ENCODE measurements at regions of chr18 and their contacts with region 1.

Region 1: DNA sequence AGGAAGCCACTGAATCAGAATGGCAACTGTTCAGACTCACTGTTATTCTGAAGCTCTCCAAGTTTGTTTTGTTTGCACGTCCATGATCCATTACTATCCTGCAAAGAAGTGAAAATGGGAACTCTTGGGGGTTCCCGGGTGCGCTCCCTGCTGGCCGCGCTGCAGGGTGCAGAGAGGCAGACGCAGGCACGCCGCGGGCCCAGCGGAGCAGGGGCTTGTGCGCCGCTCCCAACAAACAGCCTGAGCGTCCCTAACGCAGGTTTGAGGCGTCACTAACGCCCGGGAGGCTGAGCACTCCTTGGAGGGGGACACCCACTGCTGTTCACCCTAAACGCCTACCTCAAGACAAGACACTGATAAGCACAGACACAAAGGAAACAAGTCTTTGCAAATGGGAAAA is 14.3 kb upstream of the PIEZO2 start:
- DNase-seq: peak in 1 of 5 donors; percentile 69
- ATAC-seq: peak in 2 of 4 donors; percentile 63 to 67
- H3K4me3 ChIP-seq: no peak overlapping the region
- H3K27ac ChIP-seq: no peak overlapping the region
- H3K4me1 ChIP-seq: no peaks in the 10 kb centered on the region
- H3K27me3 ChIP-seq: peaks cover 0 to 24% (median 2%) of the 10 kb centered on the region in 9 donors
- CTCF ChIP-seq: peak; percentile 16 to 61 (median 40)
- POLR2A ChIP-seq: no peak

Region 2: GRCh38 chr18:10846657-10847407 is 316.8 kb before region 1 on chr18:
- intact Hi-C with region 1: loop called in 3 of 10 experiments (anchors 2 to 5 kb)
- DNase-seq: no peak
- ATAC-seq: no peak
- H3K4me3 ChIP-seq: no peak overlapping the region
- H3K27ac ChIP-seq: no peak overlapping the region
- H3K4me1 ChIP-seq: peaks cover 0 to 4% (median 0%) of the 10 kb centered on the region in 12 donors
- H3K27me3 ChIP-seq: peaks cover 0 to 6% (median 0%) of the 10 kb centered on the region in 9 donors
- CTCF ChIP-seq: no peak
- POLR2A ChIP-seq: no peak

Region 3: GRCh38 chr18:11387880-11388279 is 224.2 kb after region 1 on chr18:
- intact Hi-C with region 1: loop called in 1 of 10 experiments (anchors 10 kb)
- DNase-seq: peak; percentile 61 to 79 (median 74)
- ATAC-seq: peak in 3 of 4 donors; percentile 79 to 87 (median 81)
- H3K4me3 ChIP-seq: no peak overlapping the region
- H3K27ac ChIP-seq: no peak overlapping the region
- H3K4me1 ChIP-seq: no peaks in the 10 kb centered on the region
- H3K27me3 ChIP-seq: no peaks in the 10 kb centered on the region
- CTCF ChIP-seq: peak in 11 of 12 donors; percentile 38 to 65 (median 50)
- POLR2A ChIP-seq: no peak

Measured in heart left ventricle (tissue), 16 donors.